Endothelial cell of umbilical vein (primary cell): ENCODE measurements at regions of chr9 and their contacts with region 1.

Region 1: DNA sequence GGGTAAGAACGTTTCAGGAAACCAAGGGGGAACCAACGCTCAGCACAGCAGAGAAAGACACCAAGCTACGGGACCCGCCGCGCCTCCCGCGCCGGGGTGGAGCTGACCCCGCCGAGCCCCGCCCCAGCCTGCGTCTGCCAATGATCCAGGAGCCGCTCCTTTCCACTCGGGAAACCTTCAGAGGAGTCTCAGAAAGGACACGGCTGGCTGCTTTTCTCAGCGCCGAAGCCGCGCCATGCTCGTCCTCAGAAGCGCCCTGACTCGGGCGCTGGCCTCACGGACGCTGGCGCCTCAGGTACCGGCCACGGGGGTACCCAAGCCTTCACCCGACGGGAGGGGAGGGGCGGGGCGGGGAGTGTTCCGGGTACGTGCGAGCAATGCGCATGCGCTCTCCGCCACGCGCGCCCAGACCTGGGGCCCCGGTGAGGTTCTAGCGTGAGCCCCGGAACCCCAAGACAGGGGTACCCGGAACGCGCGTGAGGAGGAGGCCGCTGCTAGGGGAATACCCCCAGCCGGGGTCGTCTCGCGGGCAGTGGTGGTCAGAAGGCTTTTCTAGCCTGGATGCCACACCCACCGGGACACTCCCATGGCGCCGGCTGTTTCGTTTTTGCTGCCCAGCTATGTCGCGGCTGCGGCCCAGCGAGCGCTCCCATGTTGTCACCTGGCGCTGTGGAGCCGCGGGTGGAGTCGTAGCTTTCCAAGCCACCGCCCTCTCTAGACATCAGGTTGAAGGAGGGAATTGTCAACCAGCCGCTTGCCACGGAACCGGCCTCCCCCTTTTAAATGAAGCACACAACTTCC is at the start of gene NIPSNAP3A:
- DNase-seq: peak; percentile 84
- H3K4me3 ChIP-seq: peak within 1 kb of the TSS; percentile 65 to 80 (median 79)
- H3K27ac ChIP-seq: peak within 1 kb of the TSS; percentile 79
- H3K4me1 ChIP-seq: peaks cover 13% of the 10 kb centered on the region
- H3K27me3 ChIP-seq: no peaks in the 10 kb centered on the region
- CTCF ChIP-seq: no peak
- POLR2A ChIP-seq: peak; percentile 79
- total RNA-seq, gene NIPSNAP3A: 27.2 and 27.8 TPM in 2 replicates

Region 2: DNA sequence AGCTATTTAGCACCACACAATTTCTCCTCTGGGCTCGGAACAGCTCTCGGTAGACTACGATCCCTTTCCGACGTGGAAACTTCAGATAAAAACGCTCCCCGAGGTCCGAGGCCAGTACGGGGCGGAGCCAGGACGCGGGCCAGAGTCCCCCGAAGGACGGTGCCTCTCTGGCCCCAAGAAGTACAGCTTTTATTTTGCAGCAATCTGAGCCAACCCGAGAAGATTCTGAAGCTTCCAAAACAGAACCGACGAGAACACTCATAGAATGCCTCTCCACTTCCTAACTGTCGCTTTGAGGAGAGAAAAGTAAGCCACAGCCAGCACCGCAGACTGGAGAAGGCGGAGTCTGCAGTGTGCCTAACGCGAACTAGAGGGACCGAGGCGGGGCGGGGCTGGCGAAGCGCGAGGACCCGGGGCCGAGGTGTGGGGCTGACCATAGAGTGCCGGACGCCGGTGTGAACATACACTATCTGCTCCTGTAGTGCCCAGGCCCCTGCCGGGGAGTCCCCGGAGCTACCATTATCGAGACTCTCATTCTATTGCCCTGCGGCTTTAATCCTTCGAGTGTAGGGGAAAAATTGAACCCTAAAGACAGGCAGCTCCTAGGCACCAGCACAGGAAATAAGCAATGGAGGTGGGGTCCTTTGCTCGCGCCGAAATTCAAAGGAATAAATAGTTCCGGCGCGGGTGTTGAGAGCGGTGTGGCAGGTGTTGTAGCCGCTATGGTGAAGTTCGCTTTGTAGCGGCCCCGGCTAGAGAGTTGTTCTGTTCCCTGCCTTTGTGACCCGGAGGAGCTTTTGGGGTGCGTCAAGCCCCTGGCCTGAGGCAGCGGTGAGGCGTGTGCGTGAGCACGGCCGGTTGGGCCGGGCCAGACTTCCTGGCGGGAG is 653.9 kb before region 1 on chr9 and contains the start of gene SMC2:
- CTCF ChIA-PET with region 1: interaction called, 4 read pairs
- POLR2A ChIA-PET with region 1: no interaction called
- dilution Hi-C with region 1: no loop called
- intact Hi-C with region 1: loop called (anchors 1 kb)
- DNase-seq: peak; percentile 95
- H3K4me3 ChIP-seq: peak within 1 kb of the TSS; percentile 46 to 97 (median 90)
- H3K27ac ChIP-seq: peak within 1 kb of the TSS; percentile 89
- H3K4me1 ChIP-seq: peaks cover 23% of the 10 kb centered on the region
- H3K27me3 ChIP-seq: no peaks in the 10 kb centered on the region
- CTCF ChIP-seq: no peak
- POLR2A ChIP-seq: peak; percentile 88
- total RNA-seq, gene SMC2: 31.4 and 34.1 TPM in 2 replicates

Region 3: GRCh38 chr9:104177003-104177611 is 570.7 kb before region 1 on chr9:
- CTCF ChIA-PET with region 1: interaction called, 10 read pairs
- POLR2A ChIA-PET with region 1: no interaction called
- dilution Hi-C with region 1: no loop called
- intact Hi-C with region 1: loop called (anchors 2 kb)
- DNase-seq: peak; percentile 14
- H3K4me3 ChIP-seq: no peak overlapping the region
- H3K27ac ChIP-seq: no peak overlapping the region
- H3K4me1 ChIP-seq: no peaks in the 10 kb centered on the region
- H3K27me3 ChIP-seq: no peaks in the 10 kb centered on the region
- CTCF ChIP-seq: peak; percentile 14 to 15
- POLR2A ChIP-seq: no peak

Region 4: DNA sequence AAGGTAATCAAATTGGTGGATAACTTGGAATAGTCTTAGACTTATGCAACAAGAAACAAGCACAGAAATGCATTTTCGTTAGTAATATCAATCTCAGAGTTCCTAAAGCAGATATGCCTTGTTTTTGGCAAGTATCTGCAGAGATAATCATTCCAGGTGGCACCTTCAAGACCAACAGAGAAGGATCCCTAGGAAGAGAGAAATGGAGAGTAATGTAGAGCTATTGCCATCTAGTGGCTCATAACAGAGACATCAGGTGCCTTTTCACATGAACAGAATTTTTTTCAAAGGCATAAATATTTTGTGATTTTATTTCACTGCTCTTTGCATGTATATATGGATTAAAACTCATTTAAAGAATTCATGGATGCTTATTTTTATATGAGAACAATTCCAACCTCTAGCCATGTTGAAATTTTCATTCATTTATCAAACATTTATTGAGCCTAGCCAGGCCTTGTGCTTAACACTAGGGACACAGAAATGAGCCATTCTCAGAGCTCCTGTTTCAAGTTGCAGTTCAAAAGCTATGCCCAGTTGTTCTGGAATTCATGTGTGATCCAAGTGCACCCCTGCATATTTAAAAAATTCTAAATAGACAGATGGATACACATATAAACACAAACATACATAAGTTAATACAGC is 361.2 kb before region 1 on chr9:
- CTCF ChIA-PET with region 1: no interaction called
- POLR2A ChIA-PET with region 1: no interaction called
- dilution Hi-C with region 1: no loop called
- intact Hi-C with region 1: loop called (anchors 1 kb)
- DNase-seq: peak; percentile 20
- H3K4me3 ChIP-seq: no peak overlapping the region
- H3K27ac ChIP-seq: no peak overlapping the region
- H3K4me1 ChIP-seq: no peaks in the 10 kb centered on the region
- H3K27me3 ChIP-seq: no peaks in the 10 kb centered on the region
- CTCF ChIP-seq: peak; percentile 33 to 41
- POLR2A ChIP-seq: no peak

Region 5: GRCh38 chr9:104575456-104575855 is 172.3 kb before region 1 on chr9:
- CTCF ChIA-PET with region 1: no interaction called
- POLR2A ChIA-PET with region 1: no interaction called
- dilution Hi-C with region 1: no loop called
- intact Hi-C with region 1: no loop called
- DNase-seq: no peak
- H3K4me3 ChIP-seq: no peak overlapping the region
- H3K27ac ChIP-seq: no peak overlapping the region
- H3K4me1 ChIP-seq: no peaks in the 10 kb centered on the region
- H3K27me3 ChIP-seq: no peaks in the 10 kb centered on the region
- CTCF ChIP-seq: no peak
- POLR2A ChIP-seq: no peak

Region 6: DNA sequence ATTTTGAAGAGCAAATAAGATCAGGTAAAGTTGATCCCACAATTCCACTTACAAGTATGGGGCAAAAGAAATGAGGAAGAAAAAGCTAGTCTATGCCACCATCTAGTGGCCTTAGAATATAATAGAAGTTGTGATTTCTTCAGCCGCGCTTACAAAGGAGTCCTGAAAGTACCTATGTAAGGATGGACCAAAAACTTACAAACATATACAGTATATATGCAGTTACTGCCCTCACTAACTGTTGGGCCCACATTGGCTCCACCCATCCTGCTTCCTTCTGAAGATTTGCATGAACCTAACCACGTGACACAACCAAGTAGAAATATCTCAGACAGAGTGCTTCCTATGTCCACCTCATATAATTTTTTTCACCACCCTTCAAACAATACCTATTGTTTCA is 65.1 kb before region 1 on chr9:
- CTCF ChIA-PET with region 1: interaction called, 4 read pairs
- POLR2A ChIA-PET with region 1: no interaction called
- dilution Hi-C with region 1: no loop called
- intact Hi-C with region 1: loop called (anchors 5 kb)
- DNase-seq: peak; percentile 60
- H3K4me3 ChIP-seq: no peak overlapping the region
- H3K27ac ChIP-seq: no peak overlapping the region
- H3K4me1 ChIP-seq: no peaks in the 10 kb centered on the region
- H3K27me3 ChIP-seq: peaks cover 0 to 2% of the 10 kb centered on the region in 2 experiments
- CTCF ChIP-seq: peak; percentile 22 to 31
- POLR2A ChIP-seq: no peak